ENCODE measurements at regions of chr5 and their contacts with region 1.

Region 1: GRCh38 chr5:113606298-113607134 is 93.0 kb downstream of the YTHDC2 start:
- DNase-seq: peak; percentile 7
- ATAC-seq: peak; percentile 98
- H3K4me3 ChIP-seq: no peak overlapping the region
- H3K27ac ChIP-seq: no peak overlapping the region
- H3K4me1 ChIP-seq: no peaks in the 10 kb centered on the region
- H3K27me3 ChIP-seq: no peaks in the 10 kb centered on the region
- CTCF ChIP-seq: peak; percentile 63 to 82 (median 73)
- EP300 ChIP-seq: no peak
- POLR2A ChIP-seq: no peak
- RAD21 ChIP-seq: peak; percentile 96

Region 2: GRCh38 chr5:112669328-112669963 is 937.1 kb before region 1 on chr5:
- CTCF ChIA-PET with region 1: no interaction called
- POLR2A ChIA-PET with region 1: no interaction called
- RAD21 ChIA-PET with region 1: no interaction called
- SMC1A ChIA-PET with region 1: no interaction called
- in situ Hi-C with region 1: no loop called
- intact Hi-C with region 1: no loop called
- DNase-seq: no peak
- ATAC-seq: peak; percentile 56
- H3K4me3 ChIP-seq: no peak overlapping the region
- H3K27ac ChIP-seq: no peak overlapping the region
- H3K4me1 ChIP-seq: no peaks in the 10 kb centered on the region
- H3K27me3 ChIP-seq: no peaks in the 10 kb centered on the region; a peak in 1 of 4 replicates
- CTCF ChIP-seq: no peak
- EP300 ChIP-seq: no peak
- POLR2A ChIP-seq: no peak
- RAD21 ChIP-seq: no peak

Region 3: DNA sequence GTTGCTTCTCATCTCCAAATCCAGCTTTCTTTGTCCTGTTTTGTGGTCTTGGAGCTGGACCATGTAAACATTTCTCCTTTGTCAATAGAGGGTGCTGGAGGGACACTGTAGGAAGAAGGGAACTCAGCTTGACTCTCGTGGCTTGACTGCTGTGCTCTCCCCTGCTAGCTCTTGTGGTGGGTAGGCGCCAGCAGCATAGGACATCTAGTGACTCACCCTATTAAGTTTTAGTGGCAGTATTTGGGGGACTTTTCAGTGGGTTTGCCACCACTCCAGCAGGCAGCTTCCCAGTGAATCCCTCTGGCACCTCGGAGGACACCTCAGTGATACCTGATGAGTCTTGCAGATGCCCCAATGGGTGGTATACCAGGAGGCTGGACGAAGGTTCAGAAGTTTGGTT is 269.5 kb before region 1 on chr5:
- CTCF ChIA-PET with region 1: interaction called, 3 read pairs
- POLR2A ChIA-PET with region 1: no interaction called
- RAD21 ChIA-PET with region 1: no interaction called
- SMC1A ChIA-PET with region 1: no interaction called
- in situ Hi-C with region 1: no loop called
- intact Hi-C with region 1: loop called (anchors 2 kb)
- DNase-seq: no peak
- ATAC-seq: peak; percentile 64
- H3K4me3 ChIP-seq: no peak overlapping the region
- H3K27ac ChIP-seq: no peak overlapping the region
- H3K4me1 ChIP-seq: no peaks in the 10 kb centered on the region
- H3K27me3 ChIP-seq: no peaks in the 10 kb centered on the region; a peak in 1 of 4 replicates
- CTCF ChIP-seq: peak; percentile 28 to 31 (median 28); a peak in 3 of 6 replicates
- EP300 ChIP-seq: no peak
- POLR2A ChIP-seq: no peak
- RAD21 ChIP-seq: peak; percentile 50